Caco-2 (cell line): ENCODE measurements at regions of chr13 and their contacts with region 1.

Region 1: GRCh38 chr13:38417727-38418126 is 68.1 kb downstream of the UFM1 start:
- DNase-seq: peak; percentile 55 to 68
- H3K4me3 ChIP-seq: no peak overlapping the region
- H3K4me3 Mint-ChIP-seq: no peak overlapping the region
- H3K27ac Mint-ChIP-seq: no peak overlapping the region
- H3K4me1 ChIP-seq: no peaks in the 10 kb centered on the region
- H3K4me1 Mint-ChIP-seq: no peaks in the 10 kb centered on the region
- H3K27me3 ChIP-seq: no peaks in the 10 kb centered on the region
- H3K27me3 Mint-ChIP-seq: no peaks in the 10 kb centered on the region
- CTCF ChIP-seq: peak; percentile 60 to 69

Region 2: GRCh38 chr13:38053901-38054300 is 363.8 kb before region 1 on chr13:
- CTCF ChIA-PET with region 1: no interaction called
- POLR2A ChIA-PET with region 1: no interaction called
- intact Hi-C with region 1: loop called (anchors 10 kb)
- DNase-seq: no peak
- H3K4me3 ChIP-seq: no peak overlapping the region
- H3K4me3 Mint-ChIP-seq: no peak overlapping the region
- H3K27ac Mint-ChIP-seq: no peak overlapping the region
- H3K4me1 ChIP-seq: no peaks in the 10 kb centered on the region
- H3K4me1 Mint-ChIP-seq: no peaks in the 10 kb centered on the region
- H3K27me3 ChIP-seq: no peaks in the 10 kb centered on the region
- H3K27me3 Mint-ChIP-seq: no peaks in the 10 kb centered on the region
- CTCF ChIP-seq: no peak

Region 3: GRCh38 chr13:38349390-38350113 is 68.2 kb before region 1 on chr13 and contains the start of gene UFM1:
- CTCF ChIA-PET with region 1: no interaction called
- POLR2A ChIA-PET with region 1: no interaction called
- intact Hi-C with region 1: loop called (anchors 1 kb)
- DNase-seq: peak; percentile 91 to 95
- H3K4me3 ChIP-seq: peak within 1 kb of the TSS; percentile 88
- H3K4me3 Mint-ChIP-seq: peak within 1 kb of the TSS; percentile 89
- H3K27ac Mint-ChIP-seq: peak within 1 kb of the TSS; percentile 93
- H3K4me1 ChIP-seq: peaks cover 22% of the 10 kb centered on the region
- H3K4me1 Mint-ChIP-seq: peaks cover 34% of the 10 kb centered on the region
- H3K27me3 ChIP-seq: no peaks in the 10 kb centered on the region
- H3K27me3 Mint-ChIP-seq: no peaks in the 10 kb centered on the region
- CTCF ChIP-seq: no peak
- total RNA-seq, gene UFM1: 98.3 and 106 TPM in 2 replicates

Region 4: DNA sequence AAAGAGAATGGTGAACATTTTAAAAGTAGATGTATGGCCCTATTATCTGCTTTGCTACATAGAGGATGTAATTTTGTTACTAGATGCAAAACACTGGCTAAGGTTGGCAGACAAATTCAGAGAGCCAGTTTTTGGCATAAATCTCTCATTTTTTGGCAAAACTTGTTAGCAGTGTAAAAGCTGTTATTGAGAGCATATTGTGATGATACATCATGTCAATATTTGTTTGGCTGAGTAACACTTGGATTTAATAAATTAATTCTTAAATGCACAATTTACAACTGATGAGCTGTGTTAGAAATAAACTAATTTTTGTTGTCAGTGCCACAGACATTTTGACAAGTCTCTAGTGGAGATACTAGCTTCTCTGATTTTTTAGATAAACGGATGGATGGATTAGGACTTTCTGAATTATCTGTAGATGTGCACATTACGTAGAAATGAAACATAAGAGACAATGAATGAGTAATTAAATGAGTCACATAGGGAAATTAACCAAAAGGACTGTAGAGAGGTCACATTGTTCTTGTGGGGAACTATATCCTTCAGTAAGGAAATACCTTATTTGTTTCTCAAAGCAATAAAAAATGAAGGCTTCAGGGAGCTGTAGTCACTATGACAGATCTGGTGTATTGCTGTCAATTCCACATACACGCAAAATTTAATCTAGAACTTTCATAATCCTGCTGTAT is 50.6 kb before region 1 on chr13:
- CTCF ChIA-PET with region 1: no interaction called
- POLR2A ChIA-PET with region 1: no interaction called
- intact Hi-C with region 1: loop called (anchors 2 kb)
- DNase-seq: no peak
- H3K4me3 ChIP-seq: no peak overlapping the region
- H3K4me3 Mint-ChIP-seq: no peak overlapping the region
- H3K27ac Mint-ChIP-seq: no peak overlapping the region
- H3K4me1 ChIP-seq: peaks cover 33% of the 10 kb centered on the region
- H3K4me1 Mint-ChIP-seq: peaks cover 7% of the 10 kb centered on the region
- H3K27me3 ChIP-seq: no peaks in the 10 kb centered on the region
- H3K27me3 Mint-ChIP-seq: no peaks in the 10 kb centered on the region
- CTCF ChIP-seq: no peak

Region 5: GRCh38 chr13:38483623-38484022 is 65.9 kb after region 1 on chr13:
- CTCF ChIA-PET with region 1: no interaction called
- POLR2A ChIA-PET with region 1: no interaction called
- intact Hi-C with region 1: no loop called
- DNase-seq: no peak
- H3K4me3 ChIP-seq: no peak overlapping the region
- H3K4me3 Mint-ChIP-seq: no peak overlapping the region
- H3K27ac Mint-ChIP-seq: no peak overlapping the region
- H3K4me1 ChIP-seq: no peaks in the 10 kb centered on the region
- H3K4me1 Mint-ChIP-seq: no peaks in the 10 kb centered on the region
- H3K27me3 ChIP-seq: no peaks in the 10 kb centered on the region
- H3K27me3 Mint-ChIP-seq: no peaks in the 10 kb centered on the region
- CTCF ChIP-seq: no peak